Activated CD4-positive, alpha-beta T cell treated with anti-CD3 and anti-CD28 coated beads for 36 hours (primary cell): ENCODE measurements at regions of chr7 and their contacts with region 1.

Region 1: GRCh38 chr7:14676896-14677295 is 225.7 kb downstream of the DGKB start:
- DNase-seq: no peak
- ATAC-seq: no peak
- H3K4me3 Mint-ChIP-seq: no peak overlapping the region
- H3K27ac Mint-ChIP-seq: no peak overlapping the region
- H3K4me1 Mint-ChIP-seq: no peaks in the 10 kb centered on the region
- H3K27me3 Mint-ChIP-seq: peaks cover 2% of the 10 kb centered on the region

Region 2: GRCh38 chr7:14626076-14626475 is 50.8 kb before region 1 on chr7:
- CTCF ChIA-PET with region 1: no interaction called
- POLR2A ChIA-PET with region 1: no interaction called
- intact Hi-C with region 1: no loop called
- DNase-seq: no peak
- ATAC-seq: no peak
- H3K4me3 Mint-ChIP-seq: no peak overlapping the region
- H3K27ac Mint-ChIP-seq: no peak overlapping the region
- H3K4me1 Mint-ChIP-seq: no peaks in the 10 kb centered on the region
- H3K27me3 Mint-ChIP-seq: no peaks in the 10 kb centered on the region

Region 3: GRCh38 chr7:14637968-14638367 is 38.9 kb before region 1 on chr7:
- CTCF ChIA-PET with region 1: no interaction called
- POLR2A ChIA-PET with region 1: no interaction called
- intact Hi-C with region 1: no loop called
- DNase-seq: no peak
- ATAC-seq: no peak
- H3K4me3 Mint-ChIP-seq: no peak overlapping the region
- H3K27ac Mint-ChIP-seq: no peak overlapping the region
- H3K4me1 Mint-ChIP-seq: no peaks in the 10 kb centered on the region
- H3K27me3 Mint-ChIP-seq: no peaks in the 10 kb centered on the region

Region 4: DNA sequence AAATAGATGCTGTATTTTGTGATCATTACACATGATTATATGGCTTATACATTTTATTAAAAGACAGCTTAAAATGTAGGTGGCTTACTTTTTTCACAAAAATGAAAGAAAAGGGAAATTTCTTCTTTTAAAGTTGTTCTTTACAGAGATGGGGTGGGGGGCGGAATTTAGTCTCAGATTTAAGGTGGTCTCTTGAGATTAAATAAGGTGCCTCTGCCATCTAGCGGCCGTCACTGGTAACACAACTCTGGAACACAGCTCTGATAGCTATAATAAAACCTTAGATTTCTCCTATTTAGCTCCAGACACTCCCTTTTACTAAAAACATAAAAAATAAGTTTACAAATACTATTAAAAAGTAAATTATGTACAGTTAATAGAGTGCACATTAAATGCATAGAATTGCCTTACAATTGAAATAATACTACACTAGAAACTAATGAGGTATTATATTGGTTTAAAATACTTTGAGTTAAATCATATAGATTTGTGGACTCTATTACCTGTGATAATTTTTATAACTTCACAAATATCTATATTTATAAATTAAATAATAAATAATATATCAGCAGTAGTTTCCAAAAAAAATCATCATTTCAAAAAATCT is 14.8 kb after region 1 on chr7:
- CTCF ChIA-PET with region 1: interaction called, 25 read pairs
- POLR2A ChIA-PET with region 1: no interaction called
- intact Hi-C with region 1: no loop called
- DNase-seq: peak; percentile 62
- ATAC-seq: no peak
- H3K4me3 Mint-ChIP-seq: no peak overlapping the region
- H3K27ac Mint-ChIP-seq: no peak overlapping the region
- H3K4me1 Mint-ChIP-seq: no peaks in the 10 kb centered on the region
- H3K27me3 Mint-ChIP-seq: no peaks in the 10 kb centered on the region

Region 5: GRCh38 chr7:15515252-15515651 is 838.4 kb after region 1 on chr7:
- CTCF ChIA-PET with region 1: no interaction called
- POLR2A ChIA-PET with region 1: no interaction called
- intact Hi-C with region 1: no loop called
- DNase-seq: no peak
- ATAC-seq: no peak
- H3K4me3 Mint-ChIP-seq: no peak overlapping the region
- H3K27ac Mint-ChIP-seq: no peak overlapping the region
- H3K4me1 Mint-ChIP-seq: no peaks in the 10 kb centered on the region
- H3K27me3 Mint-ChIP-seq: no peaks in the 10 kb centered on the region